Activated T-helper 1 cell treated with anti-CD3 and anti-CD28 coated beads, Interleukin-12 subunit alpha, Interleukin-12 subunit beta, Interleukin-2, Interleukin-4 antibody, amounts not matched to agents 30 ng/mL and 10 ng/mL and 1 ng/mL, durations not matched to agents 14 hours and 24 hours and 36 hours (primary cell): ENCODE measurements at regions of chr2 and their contacts with region 1.

Region 1: DNA sequence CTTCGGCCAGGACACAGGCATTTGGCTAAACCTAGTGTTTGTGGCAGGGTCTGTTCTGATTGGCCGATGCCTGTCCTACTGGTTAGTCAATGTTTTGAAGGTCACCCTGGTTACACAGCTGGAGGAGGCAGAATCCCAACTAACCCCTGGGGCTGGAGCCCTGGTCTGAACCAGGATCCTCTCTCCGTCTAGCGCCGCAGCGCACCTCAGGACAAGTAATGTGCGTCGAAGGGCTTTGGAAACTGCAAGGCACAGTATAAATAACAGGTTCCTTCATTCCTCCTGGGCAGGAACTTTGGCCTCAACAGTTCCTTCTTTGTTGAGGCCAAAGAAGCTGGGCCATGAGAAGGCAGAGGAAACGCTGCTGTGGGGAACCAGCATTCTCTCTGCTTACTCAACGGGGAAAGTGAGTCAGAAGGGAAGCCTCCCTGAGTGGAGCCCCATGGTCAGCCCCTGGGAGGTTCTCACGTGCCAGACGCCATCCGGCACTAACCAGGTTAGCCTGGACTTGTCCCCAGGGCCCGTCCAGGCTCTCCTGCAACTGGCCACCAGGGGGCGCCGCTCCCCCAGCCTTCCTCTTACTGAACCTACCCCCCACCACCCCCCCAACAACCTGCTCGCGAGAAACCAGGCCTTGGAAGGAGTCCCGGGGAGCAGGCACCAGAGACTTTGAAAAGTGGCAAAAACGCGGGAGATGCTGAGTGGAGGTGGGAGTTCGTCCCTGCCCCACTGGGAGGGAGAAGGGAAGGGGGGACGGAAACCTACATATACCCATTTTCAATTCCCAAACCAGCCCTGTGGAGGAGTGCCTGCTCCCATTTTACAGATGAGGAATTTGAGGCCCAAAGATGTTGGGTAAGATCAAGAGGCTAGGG is 19.8 kb downstream of the TEX44 start:
- DNase-seq: peak; percentile 87
- H3K4me3 Mint-ChIP-seq: peak overlapping the region; percentile 80
- H3K27ac Mint-ChIP-seq: peak overlapping the region; percentile 97
- H3K4me1 Mint-ChIP-seq: peaks cover 65% of the 10 kb centered on the region
- H3K27me3 Mint-ChIP-seq: no peaks in the 10 kb centered on the region

Region 2: DNA sequence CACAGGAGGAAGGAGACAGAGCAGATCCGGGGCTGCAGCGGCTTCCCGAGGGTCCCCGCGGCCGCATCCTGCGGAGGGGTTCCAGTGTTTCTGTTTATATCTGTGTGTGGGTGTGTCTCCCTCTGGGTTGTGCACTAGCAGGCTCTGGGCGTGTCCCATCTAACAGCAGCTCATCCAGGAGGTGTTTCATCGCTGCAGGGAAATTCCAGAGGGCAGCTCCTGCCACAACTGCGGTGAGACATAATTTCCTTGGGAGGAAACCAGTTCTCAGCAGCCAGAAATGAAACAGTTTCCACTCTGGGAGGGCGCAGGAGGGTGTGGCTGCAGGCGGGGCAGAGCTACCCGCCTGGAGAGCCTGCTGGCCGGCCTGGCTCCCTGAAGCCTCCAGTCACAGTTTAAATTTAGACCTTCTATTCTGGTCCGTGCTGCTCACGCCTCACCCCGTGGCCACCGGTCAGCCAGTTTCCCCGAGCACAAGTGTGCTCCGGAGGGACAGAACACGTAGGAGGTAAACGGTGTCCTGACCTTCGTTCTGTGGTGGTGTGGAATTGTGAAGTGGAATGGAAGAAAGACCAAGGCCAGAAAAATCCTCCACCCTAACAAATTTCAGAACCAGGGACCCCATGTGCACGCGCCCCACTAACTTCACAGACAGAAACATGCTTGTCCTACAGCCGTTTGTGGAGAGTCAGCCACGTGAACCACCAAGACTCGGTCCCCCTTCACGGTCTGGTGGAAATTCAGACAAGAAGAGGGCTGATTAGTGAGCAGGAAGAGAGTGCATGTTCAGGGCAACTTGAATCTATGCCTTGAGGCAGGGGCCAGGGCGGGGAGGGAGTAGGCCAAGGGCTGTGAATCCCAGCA is 30.4 kb after region 1 on chr2:
- intact Hi-C with region 1: loop called (anchors 1 kb)
- DNase-seq: peak; percentile 76
- H3K4me3 Mint-ChIP-seq: peak overlapping the region; percentile 74
- H3K27ac Mint-ChIP-seq: peak overlapping the region; percentile 95
- H3K4me1 Mint-ChIP-seq: peaks cover 37% of the 10 kb centered on the region
- H3K27me3 Mint-ChIP-seq: no peaks in the 10 kb centered on the region

Region 3: GRCh38 chr2:231674587-231675338 is 62.3 kb after region 1 on chr2:
- intact Hi-C with region 1: loop called (anchors 1 kb)
- DNase-seq: peak; percentile 55
- H3K4me3 Mint-ChIP-seq: peak overlapping the region; percentile 15
- H3K27ac Mint-ChIP-seq: peak overlapping the region; percentile 26
- H3K4me1 Mint-ChIP-seq: peaks cover 22% of the 10 kb centered on the region
- H3K27me3 Mint-ChIP-seq: no peaks in the 10 kb centered on the region

Region 4: DNA sequence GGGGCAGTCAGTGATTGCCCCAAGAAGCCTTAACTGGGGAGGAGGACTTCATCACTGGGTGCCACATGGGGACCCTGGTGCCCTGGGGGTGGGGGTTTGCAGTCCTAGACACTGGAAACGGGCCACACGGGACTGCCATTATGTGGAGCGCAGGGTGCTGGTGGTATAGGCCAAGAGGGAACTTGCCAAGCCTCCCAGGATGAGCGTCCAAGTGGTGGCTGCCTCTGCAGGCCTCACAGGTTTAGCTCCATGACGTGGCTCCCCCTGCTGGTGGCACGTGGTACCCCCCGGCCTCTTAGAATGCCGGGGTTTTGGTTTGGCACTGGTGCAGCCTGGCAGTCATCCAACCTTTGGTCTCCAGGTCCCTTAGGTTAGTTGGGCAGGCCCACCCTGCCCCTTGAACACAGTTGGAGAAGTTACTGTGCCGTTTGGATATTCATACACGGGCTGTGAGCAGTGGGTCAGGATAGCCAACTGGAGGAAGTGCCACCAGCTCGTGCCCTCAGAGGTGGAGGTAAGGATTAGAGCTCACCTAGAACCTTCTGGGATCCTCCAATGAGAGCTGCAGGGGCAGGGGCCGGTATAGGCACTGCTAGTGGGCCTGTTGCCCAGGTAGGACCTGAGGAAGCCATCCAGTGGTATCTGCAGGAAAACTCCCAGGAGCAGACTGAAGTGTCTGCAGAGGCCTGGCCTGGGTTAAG is 101.5 kb after region 1 on chr2:
- intact Hi-C with region 1: loop called (anchors 1 kb)
- DNase-seq: peak; percentile 78
- H3K4me3 Mint-ChIP-seq: peak overlapping the region; percentile 75
- H3K27ac Mint-ChIP-seq: peak overlapping the region; percentile 93
- H3K4me1 Mint-ChIP-seq: peaks cover 26% of the 10 kb centered on the region
- H3K27me3 Mint-ChIP-seq: no peaks in the 10 kb centered on the region

Region 5: GRCh38 chr2:231786177-231786916 is 173.9 kb after region 1 on chr2 and contains the start of gene COPS7B:
- intact Hi-C with region 1: loop called (anchors 1 kb)
- DNase-seq: peak; percentile 76
- H3K4me3 Mint-ChIP-seq: peak within 1 kb of the TSS; percentile 94
- H3K27ac Mint-ChIP-seq: peak within 1 kb of the TSS; percentile 88
- H3K4me1 Mint-ChIP-seq: peaks cover 50% of the 10 kb centered on the region
- H3K27me3 Mint-ChIP-seq: no peaks in the 10 kb centered on the region
- total RNA-seq, gene COPS7B: 61.1 and 62.9 TPM in 2 replicates